ENCODE measurements at regions of chr20 and their contacts with region 1.

Region 1: GRCh38 chr20:56202493-56203077 is 45.9 kb upstream of the MC3R start:
- DNase-seq: peak; percentile 23
- H3K4me3 ChIP-seq: no peak overlapping the region
- H3K27ac ChIP-seq: no peak overlapping the region
- H3K4me1 ChIP-seq: peaks cover 5% of the 10 kb centered on the region
- H3K27me3 ChIP-seq: no peaks in the 10 kb centered on the region
- CTCF ChIP-seq: peak; percentile 76 to 81

Region 2: GRCh38 chr20:56187534-56188198 is 14.9 kb before region 1 on chr20:
- CTCF ChIA-PET with region 1: interaction called, 3 read pairs
- dilution Hi-C with region 1: no loop called
- in situ Hi-C with region 1: no loop called
- intact Hi-C with region 1: loop called (anchors 1 kb)
- DNase-seq: peak; percentile 21
- H3K4me3 ChIP-seq: no peak overlapping the region
- H3K27ac ChIP-seq: no peak overlapping the region
- H3K4me1 ChIP-seq: no peaks in the 10 kb centered on the region
- H3K27me3 ChIP-seq: no peaks in the 10 kb centered on the region
- CTCF ChIP-seq: peak; percentile 38 to 60

Region 3: GRCh38 chr20:56237335-56237734 is 34.8 kb after region 1 on chr20:
- CTCF ChIA-PET with region 1: no interaction called
- dilution Hi-C with region 1: no loop called
- in situ Hi-C with region 1: no loop called
- intact Hi-C with region 1: no loop called
- DNase-seq: no peak
- H3K4me3 ChIP-seq: no peak overlapping the region
- H3K27ac ChIP-seq: no peak overlapping the region
- H3K4me1 ChIP-seq: peaks cover 4% of the 10 kb centered on the region
- H3K27me3 ChIP-seq: peaks cover 5% of the 10 kb centered on the region
- CTCF ChIP-seq: no peak

Region 4: DNA sequence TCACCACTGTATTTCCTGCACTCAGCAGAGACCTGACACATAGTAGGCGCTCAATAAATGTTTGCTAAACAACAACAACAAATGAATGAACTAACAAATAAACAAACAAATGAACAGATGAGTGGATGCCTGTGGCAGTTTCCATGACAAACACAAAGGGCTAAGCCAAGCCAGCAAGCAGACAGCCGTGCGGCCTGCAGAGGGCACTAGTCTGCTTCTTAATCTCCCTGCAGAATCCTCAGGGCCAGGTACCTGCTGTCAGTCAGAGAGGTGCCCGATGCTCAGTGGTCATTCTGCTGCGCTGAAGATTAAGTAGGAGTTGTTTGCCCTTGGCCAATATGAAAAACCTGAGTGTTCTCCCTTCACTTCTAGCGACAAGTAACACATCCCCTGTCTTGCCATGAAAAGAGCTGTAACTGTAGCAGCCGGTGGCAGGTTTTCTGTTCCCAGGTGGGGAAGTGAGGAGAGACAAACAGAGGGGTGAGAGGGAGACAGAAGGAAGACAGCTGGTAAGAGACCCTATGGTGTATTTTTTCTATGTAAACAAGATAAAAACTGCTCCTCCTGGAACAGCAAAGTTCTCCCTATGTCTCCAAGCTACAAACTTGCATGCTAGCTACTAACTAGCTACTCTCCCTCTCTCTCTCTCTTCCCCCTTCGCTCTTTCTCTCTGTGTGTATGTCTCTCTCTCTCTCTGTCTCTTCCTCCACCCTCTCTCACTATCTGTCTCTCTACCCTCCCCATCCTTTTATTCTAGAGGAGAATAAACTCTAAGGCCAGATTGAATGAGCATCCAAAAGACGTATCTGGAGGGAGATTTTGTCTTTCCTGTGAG is 45.6 kb after region 1 on chr20 and contains the start of gene MC3R:
- CTCF ChIA-PET with region 1: interaction called, 3 read pairs
- dilution Hi-C with region 1: no loop called
- in situ Hi-C with region 1: no loop called
- intact Hi-C with region 1: loop called (anchors 1 kb)
- DNase-seq: peak; percentile 39
- H3K4me3 ChIP-seq: no peak within 1 kb of the TSS
- H3K27ac ChIP-seq: no peak within 1 kb of the TSS
- H3K4me1 ChIP-seq: peaks cover 8% of the 10 kb centered on the region
- H3K27me3 ChIP-seq: peaks cover 16% of the 10 kb centered on the region
- CTCF ChIP-seq: peak; percentile 91 to 96
- total RNA-seq, gene MC3R: not detected

Region 5: DNA sequence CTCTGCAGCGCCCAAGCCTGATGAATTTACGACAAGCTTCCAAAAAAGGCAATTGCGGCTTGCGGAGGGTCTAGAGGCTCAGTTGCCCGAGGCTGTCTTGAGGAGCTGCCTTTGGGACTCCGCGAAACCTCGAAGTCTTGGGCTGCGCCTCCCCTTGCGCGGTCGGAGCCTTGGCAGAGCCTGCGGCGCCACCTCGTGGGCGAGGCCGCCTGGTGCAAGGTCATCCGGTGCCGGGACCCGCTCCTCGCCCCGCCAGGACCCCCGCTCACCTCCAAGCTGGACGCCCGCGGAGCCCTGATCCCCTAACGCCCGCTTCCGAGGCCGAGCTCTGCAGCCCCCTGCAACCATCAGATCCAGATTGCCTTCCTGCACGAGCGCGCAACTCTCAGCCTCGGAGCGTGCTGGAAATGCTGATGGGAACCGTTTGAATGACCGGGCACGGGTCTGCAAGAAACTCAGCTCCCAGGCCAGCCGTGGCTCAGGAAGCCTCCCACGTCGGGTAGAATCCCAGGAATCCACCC is 141.3 kb after region 1 on chr20:
- CTCF ChIA-PET with region 1: no interaction called
- dilution Hi-C with region 1: no loop called
- in situ Hi-C with region 1: loop called (anchors 5 kb)
- intact Hi-C with region 1: loop called (anchors 1 kb)
- DNase-seq: peak; percentile 27
- H3K4me3 ChIP-seq: peak overlapping the region in 2 of 3 experiments; percentile 26 to 42
- H3K27ac ChIP-seq: no peak overlapping the region
- H3K4me1 ChIP-seq: peaks cover 3% of the 10 kb centered on the region
- H3K27me3 ChIP-seq: no peaks in the 10 kb centered on the region
- CTCF ChIP-seq: peak; percentile 70 to 92

Region 6: GRCh38 chr20:56497326-56497725 is 294.7 kb after region 1 on chr20:
- CTCF ChIA-PET with region 1: no interaction called
- dilution Hi-C with region 1: no loop called
- in situ Hi-C with region 1: no loop called
- intact Hi-C with region 1: no loop called
- DNase-seq: no peak
- H3K4me3 ChIP-seq: no peak overlapping the region
- H3K27ac ChIP-seq: no peak overlapping the region
- H3K4me1 ChIP-seq: no peaks in the 10 kb centered on the region
- H3K27me3 ChIP-seq: no peaks in the 10 kb centered on the region
- CTCF ChIP-seq: no peak